Endothelial cell of umbilical vein (primary cell): ENCODE measurements at regions of chr1 and their contacts with region 1.

Region 1: DNA sequence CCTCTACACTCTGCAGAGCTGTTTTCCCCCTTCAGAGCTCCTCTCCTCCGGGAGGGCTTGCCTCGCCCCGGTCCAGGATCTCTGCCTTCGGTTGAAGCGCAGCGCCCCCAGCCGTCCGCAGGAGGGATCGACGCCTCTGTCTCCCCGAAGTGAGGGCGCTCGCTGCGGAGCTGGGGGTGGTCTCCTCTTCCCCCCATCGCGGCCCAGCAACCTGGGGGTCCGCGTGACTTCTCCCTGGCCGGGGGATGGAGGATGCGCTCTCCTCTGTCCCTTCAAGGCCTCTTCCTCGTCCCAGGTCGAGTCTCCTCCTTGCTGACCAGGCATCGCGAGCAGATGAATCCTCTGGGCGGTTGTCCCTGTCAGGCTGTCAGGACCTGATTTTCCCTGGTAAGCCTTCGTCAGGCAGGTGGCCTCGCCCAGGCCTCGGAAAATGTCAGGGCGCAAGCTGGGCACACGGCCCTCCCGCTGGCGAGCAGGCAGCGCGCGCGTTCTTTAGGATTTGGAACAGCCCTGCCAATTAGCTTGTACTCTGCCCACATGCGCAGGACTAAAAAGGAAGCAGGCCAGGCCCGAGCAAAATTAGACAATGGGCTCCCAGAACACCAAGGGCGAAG is 90.5 kb downstream of the EDEM3 start:
- DNase-seq: peak; percentile 56
- H3K4me3 ChIP-seq: peak overlapping the region in 1 of 3 experiments; percentile 6
- H3K27ac ChIP-seq: no peak overlapping the region
- H3K4me1 ChIP-seq: no peaks in the 10 kb centered on the region
- H3K27me3 ChIP-seq: peaks cover 2 to 7% of the 10 kb centered on the region in 2 experiments
- CTCF ChIP-seq: peak; percentile 89 to 97
- POLR2A ChIP-seq: no peak

Region 2: DNA sequence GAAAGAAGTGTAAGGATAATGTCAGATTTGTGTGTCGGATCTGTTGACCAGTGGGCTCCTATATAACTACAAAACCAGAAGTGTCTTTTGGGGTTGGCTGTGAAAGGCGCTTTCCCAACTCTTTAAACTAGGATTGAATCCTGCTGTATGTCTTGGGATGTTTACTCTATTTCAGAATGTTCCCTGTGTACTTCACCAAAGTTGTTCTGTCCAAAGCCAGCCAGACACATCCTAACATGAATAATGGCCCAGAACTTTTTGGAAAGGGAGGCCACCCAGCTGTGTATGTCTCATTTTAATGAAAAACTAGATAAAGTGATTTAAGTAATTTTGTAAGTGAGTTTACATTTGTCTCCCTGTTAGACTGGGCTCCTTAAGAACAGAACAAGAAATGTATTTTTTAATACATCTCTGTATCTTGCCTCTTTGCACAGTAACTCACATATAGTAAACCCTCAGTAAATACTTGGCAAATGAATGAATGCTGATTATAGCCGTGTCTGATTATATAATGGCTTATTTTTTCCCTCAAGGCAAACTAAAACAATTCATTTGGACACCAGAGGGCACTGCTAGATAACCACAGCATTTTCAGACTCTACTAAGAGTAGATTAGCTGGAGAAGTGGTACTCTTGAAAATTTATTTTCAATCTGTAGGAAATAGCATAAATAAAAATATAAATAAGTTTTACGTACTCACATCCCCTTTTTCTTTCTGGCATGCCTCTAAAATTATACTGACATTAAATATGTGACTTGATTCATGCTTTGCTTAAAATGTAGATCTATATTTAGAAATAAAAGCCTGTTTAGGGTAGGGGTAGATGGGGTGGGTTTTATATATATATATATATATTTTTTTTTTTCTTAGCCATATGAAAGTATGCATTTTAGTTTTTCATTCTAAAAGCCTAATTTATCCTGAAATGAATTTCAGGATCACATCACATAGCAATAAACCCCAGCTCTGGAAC is 588.8 kb before region 1 on chr1:
- CTCF ChIA-PET with region 1: interaction called, 72 read pairs
- POLR2A ChIA-PET with region 1: no interaction called
- dilution Hi-C with region 1: no loop called
- intact Hi-C with region 1: loop called (anchors 1 kb)
- DNase-seq: peak; percentile 75
- H3K4me3 ChIP-seq: no peak overlapping the region
- H3K27ac ChIP-seq: no peak overlapping the region
- H3K4me1 ChIP-seq: no peaks in the 10 kb centered on the region
- H3K27me3 ChIP-seq: no peaks in the 10 kb centered on the region
- CTCF ChIP-seq: peak; percentile 40 to 44
- POLR2A ChIP-seq: no peak

Region 3: DNA sequence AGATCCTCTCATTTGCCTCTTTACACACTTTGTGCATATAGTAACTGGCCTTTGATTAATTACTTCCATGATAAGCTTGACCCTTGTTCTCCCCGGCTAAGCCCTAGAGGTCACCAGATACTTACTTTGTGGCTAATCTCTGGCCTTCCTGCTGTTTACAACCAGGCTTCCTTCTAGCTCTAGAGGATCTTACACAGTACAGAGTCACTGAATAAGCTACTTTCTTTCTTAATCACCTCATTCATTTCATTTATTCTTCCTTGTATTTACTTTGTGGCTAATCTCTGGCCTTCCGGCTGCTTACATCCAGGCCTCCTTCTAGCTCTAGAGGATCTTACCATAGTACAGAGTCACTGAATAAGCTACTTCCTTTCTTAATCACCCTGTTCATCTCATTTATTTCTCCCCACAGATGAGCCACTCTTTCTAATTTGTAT is 421.6 kb before region 1 on chr1:
- CTCF ChIA-PET with region 1: interaction called, 18 read pairs
- POLR2A ChIA-PET with region 1: no interaction called
- dilution Hi-C with region 1: no loop called
- intact Hi-C with region 1: loop called (anchors 1 kb)
- DNase-seq: peak; percentile 69
- H3K4me3 ChIP-seq: no peak overlapping the region
- H3K27ac ChIP-seq: no peak overlapping the region
- H3K4me1 ChIP-seq: peaks cover 7% of the 10 kb centered on the region
- H3K27me3 ChIP-seq: peaks cover 19 to 48% of the 10 kb centered on the region in 2 experiments
- CTCF ChIP-seq: no peak
- POLR2A ChIP-seq: no peak

Region 4: GRCh38 chr1:184386312-184387068 is 277.7 kb before region 1 on chr1 and contains the start of gene C1orf21:
- CTCF ChIA-PET with region 1: interaction called, 11 read pairs
- POLR2A ChIA-PET with region 1: no interaction called
- dilution Hi-C with region 1: no loop called
- intact Hi-C with region 1: loop called (anchors 5 kb)
- DNase-seq: peak; percentile 82
- H3K4me3 ChIP-seq: peak within 1 kb of the TSS; percentile 40 to 84 (median 66)
- H3K27ac ChIP-seq: no peak within 1 kb of the TSS
- H3K4me1 ChIP-seq: peaks cover 15% of the 10 kb centered on the region
- H3K27me3 ChIP-seq: peaks cover 10 to 20% of the 10 kb centered on the region in 2 experiments
- CTCF ChIP-seq: no peak
- POLR2A ChIP-seq: no peak
- total RNA-seq, gene C1orf21: 8.5 and 10.0 TPM in 2 replicates

Region 5: GRCh38 chr1:184507604-184508280 is 156.4 kb before region 1 on chr1:
- CTCF ChIA-PET with region 1: no interaction called
- POLR2A ChIA-PET with region 1: no interaction called
- dilution Hi-C with region 1: no loop called
- intact Hi-C with region 1: no loop called
- DNase-seq: peak; percentile 72
- H3K4me3 ChIP-seq: no peak overlapping the region
- H3K27ac ChIP-seq: peak overlapping the region; percentile 10
- H3K4me1 ChIP-seq: peaks cover 14% of the 10 kb centered on the region
- H3K27me3 ChIP-seq: no peaks in the 10 kb centered on the region
- CTCF ChIP-seq: no peak
- POLR2A ChIP-seq: no peak

Region 6: GRCh38 chr1:184650177-184650866 is 13.8 kb before region 1 on chr1:
- CTCF ChIA-PET with region 1: interaction called, 32 read pairs
- POLR2A ChIA-PET with region 1: no interaction called
- dilution Hi-C with region 1: no loop called
- intact Hi-C with region 1: no loop called
- DNase-seq: no peak
- H3K4me3 ChIP-seq: no peak overlapping the region
- H3K27ac ChIP-seq: no peak overlapping the region
- H3K4me1 ChIP-seq: no peaks in the 10 kb centered on the region
- H3K27me3 ChIP-seq: peaks cover 0 to 6% of the 10 kb centered on the region in 2 experiments
- CTCF ChIP-seq: no peak
- POLR2A ChIP-seq: no peak

Region 7: DNA sequence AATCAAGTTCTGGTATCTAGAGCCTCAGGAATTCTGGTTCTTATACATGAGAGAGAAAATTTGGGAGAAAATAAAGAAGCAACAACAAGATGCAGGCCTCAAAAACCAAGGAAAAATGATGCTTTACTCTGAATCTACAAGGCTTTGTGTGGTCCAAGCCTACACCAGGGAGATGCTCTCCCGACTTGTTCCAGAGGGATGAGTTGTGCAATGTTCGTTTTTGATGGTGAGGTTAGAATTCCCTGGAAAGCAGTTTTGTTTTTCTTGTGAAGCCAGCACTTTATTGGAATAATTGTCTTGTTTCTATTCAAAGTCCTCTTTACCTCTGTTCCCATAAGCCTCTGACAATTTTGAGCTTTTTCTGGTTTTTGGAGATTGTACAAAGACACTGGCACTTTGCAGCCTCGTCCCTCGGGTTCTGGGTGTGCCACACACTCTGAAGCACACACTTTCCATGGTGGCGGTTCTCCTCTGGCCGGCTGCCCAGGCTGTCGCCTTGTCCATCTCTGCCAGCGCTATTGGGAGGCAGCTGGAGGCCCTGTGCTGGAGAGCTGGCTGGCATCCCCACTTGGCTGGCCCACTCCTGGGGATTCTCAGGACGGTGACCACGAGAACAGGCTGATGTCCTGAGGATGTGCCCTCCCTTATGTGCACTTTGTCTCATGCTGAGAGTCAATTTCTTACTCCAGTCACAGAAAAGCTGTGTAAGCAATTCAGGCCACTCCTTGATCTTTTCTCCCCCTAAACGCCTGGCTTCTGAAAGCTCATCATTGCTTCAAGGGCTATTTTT is 20.3 kb after region 1 on chr1:
- CTCF ChIA-PET with region 1: interaction called, 17 read pairs
- POLR2A ChIA-PET with region 1: no interaction called
- dilution Hi-C with region 1: no loop called
- intact Hi-C with region 1: no loop called
- DNase-seq: no peak
- H3K4me3 ChIP-seq: no peak overlapping the region
- H3K27ac ChIP-seq: no peak overlapping the region
- H3K4me1 ChIP-seq: no peaks in the 10 kb centered on the region
- H3K27me3 ChIP-seq: no peaks in the 10 kb centered on the region
- CTCF ChIP-seq: no peak
- POLR2A ChIP-seq: no peak